IMR-90 (cell line): ENCODE measurements at regions of chr1 and their contacts with region 1.

Region 1: DNA sequence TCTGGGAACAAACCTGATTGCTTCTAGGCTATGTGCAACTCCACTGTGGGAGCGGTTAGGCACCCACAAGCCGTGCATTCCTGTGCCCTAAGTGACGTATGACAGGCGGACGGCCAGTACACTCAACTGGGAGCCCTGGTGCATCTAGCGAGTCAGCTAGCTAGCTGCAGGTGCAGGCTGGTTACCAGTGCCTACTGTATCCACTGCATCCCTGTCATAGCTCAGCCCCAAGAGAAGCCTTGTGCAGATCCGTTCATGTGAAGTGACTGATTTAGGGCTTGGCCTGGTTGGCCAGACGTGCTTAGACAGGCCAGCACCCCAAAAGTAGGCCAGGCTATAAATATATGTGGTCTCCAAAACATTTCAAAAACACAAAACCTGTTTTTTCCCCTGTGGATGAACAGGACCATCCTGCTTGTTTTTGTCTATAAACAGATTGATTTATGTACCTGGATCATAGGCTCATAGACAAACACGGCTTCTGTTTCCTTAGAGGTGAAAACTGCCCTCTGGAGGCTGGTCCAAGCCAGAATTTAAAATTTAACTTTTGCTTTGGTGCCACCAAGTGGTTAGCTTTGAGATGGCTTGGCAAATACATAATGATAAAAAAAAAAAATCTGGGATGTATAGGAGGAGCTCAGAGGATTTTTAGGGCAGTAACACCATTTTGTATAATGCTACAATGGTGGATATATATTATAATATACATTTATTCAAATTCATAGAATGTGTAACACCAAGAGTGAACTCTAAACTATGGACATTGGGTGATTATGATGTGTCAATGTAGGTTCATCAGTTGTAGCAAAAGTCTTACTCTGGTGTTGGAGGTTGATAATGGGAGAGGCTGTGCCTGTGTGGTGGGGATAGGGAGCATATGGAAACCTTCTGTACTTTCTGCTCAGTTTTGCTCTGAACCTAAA is 68.5 kb downstream of the GIPC2 start:
- DNase-seq: peak; percentile 81
- ATAC-seq: peak; percentile 89
- H3K4me3 ChIP-seq: no peak overlapping the region
- H3K27ac ChIP-seq: no peak overlapping the region
- H3K4me1 ChIP-seq: 0 out of 2 replicates have a peak, but pooled peaks cover 2% of the 10 kb centered on the region
- H3K27me3 ChIP-seq: no peaks in the 10 kb centered on the region
- CTCF ChIP-seq: peak; percentile 100
- POLR2A ChIP-seq: 0 out of 2 replicates have a peak, but pooled peaks have one; percentile 26
- RAD21 ChIP-seq: peak; percentile 98

Region 2: GRCh38 chr1:77594366-77595112 is 519.8 kb before region 1 on chr1:
- CTCF ChIA-PET with region 1: no interaction called
- POLR2A ChIA-PET with region 1: no interaction called
- dilution Hi-C with region 1: no loop called
- in situ Hi-C with region 1: loop called (anchors 25 kb)
- intact Hi-C with region 1: no loop called
- DNase-seq: peak; percentile 5
- ATAC-seq: no peak
- H3K4me3 ChIP-seq: no peak overlapping the region
- H3K27ac ChIP-seq: no peak overlapping the region
- H3K4me1 ChIP-seq: no peaks in the 10 kb centered on the region
- H3K27me3 ChIP-seq: no peaks in the 10 kb centered on the region
- CTCF ChIP-seq: no peak
- POLR2A ChIP-seq: no peak
- RAD21 ChIP-seq: no peak

Region 3: GRCh38 chr1:77759071-77760028 is 354.9 kb before region 1 on chr1 and contains the start of gene USP33:
- CTCF ChIA-PET with region 1: no interaction called
- POLR2A ChIA-PET with region 1: no interaction called
- dilution Hi-C with region 1: no loop called
- in situ Hi-C with region 1: no loop called
- intact Hi-C with region 1: loop called (anchors 1 kb)
- DNase-seq: peak; percentile 66
- ATAC-seq: peak; percentile 98
- H3K4me3 ChIP-seq: peak within 1 kb of the TSS; percentile 86
- H3K27ac ChIP-seq: peak within 1 kb of the TSS; percentile 82
- H3K4me1 ChIP-seq: peaks cover 4% of the 10 kb centered on the region
- H3K27me3 ChIP-seq: no peaks in the 10 kb centered on the region
- CTCF ChIP-seq: no peak
- POLR2A ChIP-seq: no peak
- RAD21 ChIP-seq: no peak
- total RNA-seq, gene USP33: 64.5 and 89.4 TPM in 2 replicates

Region 4: DNA sequence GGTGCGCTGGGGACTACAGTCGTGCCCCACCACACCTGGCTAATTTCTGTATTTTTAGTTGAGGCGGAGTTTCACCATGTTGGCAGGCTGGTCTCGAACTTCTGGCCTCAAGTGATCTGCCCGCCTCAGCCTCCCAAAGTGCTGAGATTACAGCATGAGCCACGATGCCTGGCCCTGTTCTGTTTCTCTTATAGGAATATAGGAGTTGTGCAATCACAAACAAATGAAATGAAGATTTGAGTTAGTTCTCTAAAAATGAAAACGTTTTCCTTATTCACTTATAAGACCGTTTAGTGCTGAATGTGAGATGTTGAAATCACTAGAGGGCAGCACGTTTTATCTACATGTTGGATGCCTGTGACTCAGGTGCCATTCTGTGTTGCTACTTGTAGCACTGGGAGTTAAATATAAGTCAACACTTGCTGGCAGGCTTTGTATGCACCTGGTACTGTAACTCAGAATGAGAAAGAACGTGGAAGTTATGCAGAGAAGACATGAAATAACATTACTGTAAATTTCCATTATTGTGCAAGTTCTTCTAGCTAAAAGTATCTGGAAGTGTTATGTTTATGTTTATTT is 289.1 kb before region 1 on chr1:
- CTCF ChIA-PET with region 1: no interaction called
- POLR2A ChIA-PET with region 1: no interaction called
- dilution Hi-C with region 1: no loop called
- in situ Hi-C with region 1: loop called (anchors 25 kb)
- intact Hi-C with region 1: loop called (anchors 10 kb)
- DNase-seq: peak; percentile 91
- ATAC-seq: peak; percentile 83
- H3K4me3 ChIP-seq: no peak overlapping the region
- H3K27ac ChIP-seq: peak overlapping the region; percentile 63; the same call in 1 of the 2 replicates
- H3K4me1 ChIP-seq: peaks cover 5% of the 10 kb centered on the region; the same call in 1 of the 2 replicates
- H3K27me3 ChIP-seq: no peaks in the 10 kb centered on the region
- CTCF ChIP-seq: peak; percentile 38
- POLR2A ChIP-seq: no peak
- RAD21 ChIP-seq: peak; percentile 37

Region 5: DNA sequence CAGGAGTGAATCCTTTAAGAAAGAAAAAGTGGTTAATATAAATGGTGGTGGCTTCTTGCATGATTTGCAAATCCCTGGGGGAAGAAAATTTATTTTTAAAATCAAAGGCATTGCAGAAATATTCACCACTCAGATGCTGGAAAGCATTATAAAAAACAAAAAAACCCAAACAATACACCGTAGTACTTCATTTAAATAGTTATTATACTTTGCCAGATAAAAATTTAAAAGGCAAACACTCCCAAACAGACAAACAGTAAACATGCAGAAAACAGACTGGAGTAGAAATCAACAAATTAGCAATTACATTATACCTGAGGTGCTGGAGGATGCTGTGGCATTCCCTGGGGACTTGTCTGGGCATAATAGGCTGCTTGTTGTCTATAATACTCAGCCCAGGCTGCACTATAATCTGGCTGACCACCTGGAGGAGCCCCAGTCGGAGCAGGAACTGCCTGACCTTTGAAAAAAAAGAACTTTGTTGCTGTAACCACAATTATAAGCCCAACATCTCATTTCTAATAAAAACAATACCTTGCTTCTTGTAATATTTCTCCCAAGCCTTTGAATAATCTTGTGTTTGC is 165.4 kb before region 1 on chr1:
- CTCF ChIA-PET with region 1: interaction called, 5 read pairs
- POLR2A ChIA-PET with region 1: no interaction called
- dilution Hi-C with region 1: no loop called
- in situ Hi-C with region 1: no loop called
- intact Hi-C with region 1: loop called (anchors 1 kb)
- DNase-seq: peak; percentile 42
- ATAC-seq: peak; percentile 68; the same call in 1 of the 2 replicates
- H3K4me3 ChIP-seq: no peak overlapping the region
- H3K27ac ChIP-seq: no peak overlapping the region
- H3K4me1 ChIP-seq: 0 out of 2 replicates have a peak, but pooled peaks cover 2% of the 10 kb centered on the region
- H3K27me3 ChIP-seq: no peaks in the 10 kb centered on the region
- CTCF ChIP-seq: peak; percentile 28; the same call in 1 of the 2 replicates
- POLR2A ChIP-seq: no peak
- RAD21 ChIP-seq: 0 out of 2 replicates have a peak, but pooled peaks have one; percentile 10

Region 6: DNA sequence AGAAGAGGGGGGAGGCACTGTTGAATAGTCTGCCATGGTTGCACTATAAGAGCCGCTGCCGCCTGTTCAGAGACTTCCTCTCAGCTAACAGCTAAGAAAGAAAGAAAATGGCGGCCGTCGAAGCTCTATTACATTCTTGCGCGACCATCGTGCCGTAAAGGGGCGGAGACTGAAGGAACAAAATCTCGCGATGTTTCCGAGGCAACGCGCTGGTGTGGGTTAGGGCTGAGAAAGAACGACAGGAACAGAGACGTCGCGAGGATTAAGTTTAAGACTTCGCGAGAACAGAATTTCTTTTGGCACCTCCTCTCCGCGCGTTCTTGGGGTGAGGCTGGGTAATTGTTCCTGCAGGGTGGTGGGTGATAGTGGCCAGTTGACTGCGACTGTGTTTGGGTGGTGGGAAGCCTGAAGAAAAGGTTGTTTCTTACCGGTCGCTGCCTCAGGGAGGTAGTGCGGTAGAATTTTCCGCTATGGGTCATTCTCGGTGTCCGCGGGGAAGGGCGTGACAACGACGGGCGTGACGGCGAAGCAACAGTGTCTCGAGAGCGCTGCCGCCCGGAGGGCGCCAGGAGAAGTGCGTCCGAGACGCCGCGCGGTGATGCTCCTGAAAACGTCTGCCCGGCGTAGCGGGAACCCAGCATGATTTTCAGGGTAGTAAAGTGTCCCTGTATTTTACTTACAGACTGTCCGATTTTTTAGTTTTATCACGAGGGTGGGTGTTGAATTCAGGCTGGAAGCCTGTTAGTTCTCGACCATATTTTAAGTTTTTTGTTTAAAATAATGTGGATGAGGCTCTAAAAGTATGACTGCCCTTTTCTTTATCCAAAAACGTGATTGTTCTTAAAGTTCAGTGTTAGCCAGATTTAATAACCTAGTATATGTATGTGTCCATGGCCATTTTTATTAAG is 135.1 kb before region 1 on chr1 and contains the start of gene FUBP1:
- CTCF ChIA-PET with region 1: interaction called, 6 read pairs
- POLR2A ChIA-PET with region 1: interaction called, 4 read pairs
- dilution Hi-C with region 1: no loop called
- in situ Hi-C with region 1: loop called (anchors 10 kb)
- intact Hi-C with region 1: loop called (anchors 1 kb)
- DNase-seq: peak; percentile 99
- ATAC-seq: peak; percentile 86
- H3K4me3 ChIP-seq: peak within 1 kb of the TSS; percentile 62
- H3K27ac ChIP-seq: peak within 1 kb of the TSS; percentile 92
- H3K4me1 ChIP-seq: 0 out of 2 replicates have a peak, but pooled peaks cover 2% of the 10 kb centered on the region
- H3K27me3 ChIP-seq: no peaks in the 10 kb centered on the region
- CTCF ChIP-seq: peak; percentile 65
- POLR2A ChIP-seq: peak; percentile 87
- RAD21 ChIP-seq: peak; percentile 54
- total RNA-seq, gene FUBP1: 129 and 165 TPM in 2 replicates

Region 7: DNA sequence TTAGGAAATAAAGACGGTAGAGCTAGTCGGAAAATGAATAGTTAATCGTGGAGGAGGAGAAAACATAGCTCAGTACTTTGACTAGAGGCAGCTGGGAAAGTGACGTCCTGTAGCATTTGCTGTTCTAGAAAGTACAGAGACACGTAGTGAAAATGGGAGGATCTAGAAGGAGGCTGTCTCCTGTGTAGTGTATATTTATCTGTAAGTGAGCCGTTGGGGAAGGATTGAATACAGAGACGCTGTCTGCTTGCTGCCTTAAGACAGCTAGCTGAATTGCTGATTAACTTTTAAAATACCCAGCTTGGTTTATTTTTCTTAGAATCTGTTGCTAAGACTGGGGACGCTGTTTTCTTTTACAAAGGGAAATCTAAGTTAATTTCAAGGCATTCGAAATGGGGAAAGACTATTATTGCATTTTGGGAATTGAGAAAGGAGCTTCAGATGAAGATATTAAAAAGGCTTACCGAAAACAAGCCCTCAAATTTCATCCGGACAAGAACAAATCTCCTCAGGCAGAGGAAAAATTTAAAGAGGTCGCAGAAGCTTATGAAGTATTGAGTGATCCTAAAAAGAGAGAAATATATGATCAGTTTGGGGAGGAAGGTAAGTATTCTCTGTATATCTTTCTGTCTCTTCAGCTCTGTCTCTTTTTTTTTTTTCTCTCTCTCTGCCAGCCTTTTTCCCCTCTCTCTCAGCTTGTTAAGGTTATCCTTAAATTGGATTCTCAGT is 109.4 kb before region 1 on chr1 and contains the start of gene DNAJB4:
- CTCF ChIA-PET with region 1: interaction called, 7 read pairs
- POLR2A ChIA-PET with region 1: interaction called, 3 read pairs
- dilution Hi-C with region 1: no loop called
- in situ Hi-C with region 1: no loop called
- intact Hi-C with region 1: loop called (anchors 1 kb)
- DNase-seq: peak; percentile 99
- ATAC-seq: peak; percentile 93
- H3K4me3 ChIP-seq: peak within 1 kb of the TSS; percentile 80
- H3K27ac ChIP-seq: peak within 1 kb of the TSS; percentile 85
- H3K4me1 ChIP-seq: peaks cover 4% of the 10 kb centered on the region
- H3K27me3 ChIP-seq: no peaks in the 10 kb centered on the region
- CTCF ChIP-seq: no peak
- POLR2A ChIP-seq: peak; percentile 94
- RAD21 ChIP-seq: peak; percentile 3; the same call in 1 of the 2 replicates
- total RNA-seq, gene DNAJB4: 30.6 and 76.1 TPM in 2 replicates

Region 8: GRCh38 chr1:78081980-78082860 is 32.1 kb before region 1 on chr1:
- CTCF ChIA-PET with region 1: no interaction called
- POLR2A ChIA-PET with region 1: no interaction called
- dilution Hi-C with region 1: no loop called
- in situ Hi-C with region 1: no loop called
- intact Hi-C with region 1: no loop called
- DNase-seq: peak; percentile 62
- ATAC-seq: peak; percentile 67
- H3K4me3 ChIP-seq: no peak overlapping the region
- H3K27ac ChIP-seq: no peak overlapping the region
- H3K4me1 ChIP-seq: peaks cover 2% of the 10 kb centered on the region; the same call in 1 of the 2 replicates
- H3K27me3 ChIP-seq: no peaks in the 10 kb centered on the region
- CTCF ChIP-seq: no peak
- POLR2A ChIP-seq: no peak
- RAD21 ChIP-seq: no peak

Region 9: GRCh38 chr1:78385744-78386462 is 271.6 kb after region 1 on chr1:
- CTCF ChIA-PET with region 1: no interaction called
- POLR2A ChIA-PET with region 1: no interaction called
- dilution Hi-C with region 1: no loop called
- in situ Hi-C with region 1: no loop called
- intact Hi-C with region 1: no loop called
- DNase-seq: no peak
- ATAC-seq: no peak
- H3K4me3 ChIP-seq: no peak overlapping the region
- H3K27ac ChIP-seq: no peak overlapping the region
- H3K4me1 ChIP-seq: no peaks in the 10 kb centered on the region
- H3K27me3 ChIP-seq: no peaks in the 10 kb centered on the region
- CTCF ChIP-seq: no peak
- POLR2A ChIP-seq: no peak
- RAD21 ChIP-seq: no peak

Region 10: GRCh38 chr1:78440381-78440793 is 326.1 kb after region 1 on chr1:
- CTCF ChIA-PET with region 1: no interaction called
- POLR2A ChIA-PET with region 1: no interaction called
- dilution Hi-C with region 1: no loop called
- in situ Hi-C with region 1: no loop called
- intact Hi-C with region 1: no loop called
- DNase-seq: peak; percentile 69
- ATAC-seq: peak; percentile 40; the same call in 1 of the 2 replicates
- H3K4me3 ChIP-seq: no peak overlapping the region
- H3K27ac ChIP-seq: no peak overlapping the region
- H3K4me1 ChIP-seq: no peaks in the 10 kb centered on the region; the same call in 1 of the 2 replicates
- H3K27me3 ChIP-seq: no peaks in the 10 kb centered on the region
- CTCF ChIP-seq: no peak
- POLR2A ChIP-seq: no peak
- RAD21 ChIP-seq: no peak